AG04449 (cell line): ENCODE measurements at regions of chr7 and their contacts with region 1.

Region 1: GRCh38 chr7:73879977-73880681 is 19.2 kb downstream of the TMEM270 start:
- DNase-seq: no peak
- H3K4me3 ChIP-seq: no peak overlapping the region
- CTCF ChIP-seq: no peak

Region 2: GRCh38 chr7:73842247-73842895 is 37.8 kb before region 1 on chr7 and contains the start of gene METTL27:
- CTCF ChIA-PET with region 1: no interaction called
- POLR2A ChIA-PET with region 1: no interaction called
- DNase-seq: no peak
- H3K4me3 ChIP-seq: peak within 1 kb of the TSS; percentile 75
- CTCF ChIP-seq: no peak

Region 3: GRCh38 chr7:73856941-73857340 is 23.2 kb before region 1 on chr7:
- CTCF ChIA-PET with region 1: interaction called, 19 read pairs
- POLR2A ChIA-PET with region 1: no interaction called
- DNase-seq: no peak
- H3K4me3 ChIP-seq: no peak overlapping the region
- CTCF ChIP-seq: no peak

Region 4: DNA sequence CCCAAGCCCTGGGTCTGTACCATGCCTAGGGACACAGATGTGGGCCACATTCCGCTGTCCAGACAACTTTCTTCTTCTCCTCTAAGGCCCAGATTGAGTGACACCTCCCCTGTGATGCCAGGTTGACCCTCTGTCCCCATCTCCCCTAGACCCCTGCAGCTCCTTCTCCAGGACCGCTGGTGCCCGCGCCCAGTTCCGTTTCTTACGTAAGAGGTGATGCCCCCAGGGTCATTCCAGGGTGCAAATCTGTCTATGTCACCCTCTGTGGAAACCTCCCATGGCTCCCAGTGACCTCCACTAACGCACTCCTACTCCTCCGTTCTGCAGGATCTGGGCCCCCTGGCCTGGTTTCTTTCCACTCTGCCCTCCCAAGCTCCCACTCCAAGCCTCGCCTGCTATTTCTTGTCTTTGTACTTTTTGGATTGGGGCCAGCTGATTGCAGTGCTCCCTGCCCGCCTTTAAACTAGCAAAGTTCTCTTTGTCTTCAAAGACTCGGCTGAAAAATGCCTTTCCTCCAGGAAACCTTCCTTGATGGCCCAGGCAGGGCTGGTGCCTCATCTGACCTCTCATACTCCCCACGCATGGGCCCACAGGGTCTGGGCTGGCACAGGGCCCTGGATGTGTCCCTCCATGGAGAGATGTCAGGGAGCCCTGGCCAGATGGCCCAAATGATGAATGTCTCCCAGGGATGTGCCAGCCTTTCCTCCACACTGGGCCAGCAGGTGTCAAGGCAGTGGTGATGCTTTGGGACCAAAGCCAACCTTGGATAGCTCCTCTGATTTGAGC is 126.5 kb after region 1 on chr7:
- CTCF ChIA-PET with region 1: no interaction called
- POLR2A ChIA-PET with region 1: no interaction called
- DNase-seq: no peak
- H3K4me3 ChIP-seq: no peak overlapping the region
- CTCF ChIP-seq: no peak